Posterior vena cava (tissue), 2 donors: ENCODE measurements at regions of chr12 and their contacts with region 1.

Region 1: GRCh38 chr12:128807161-128807724 is 16.5 kb downstream of the SLC15A4 start:
- DNase-seq: no peak

Region 2: GRCh38 chr12:128468926-128469325 is 338.3 kb before region 1 on chr12:
- intact Hi-C with region 1: no loop called
- DNase-seq: no peak

Region 3: GRCh38 chr12:128779901-128780300 is 27.3 kb before region 1 on chr12:
- intact Hi-C with region 1: loop called in 1 of 2 experiments (anchors 1 kb)
- DNase-seq: no peak